Natural killer cell (primary cell): ENCODE measurements at regions of chr19 and their contacts with region 1.

Region 1: DNA sequence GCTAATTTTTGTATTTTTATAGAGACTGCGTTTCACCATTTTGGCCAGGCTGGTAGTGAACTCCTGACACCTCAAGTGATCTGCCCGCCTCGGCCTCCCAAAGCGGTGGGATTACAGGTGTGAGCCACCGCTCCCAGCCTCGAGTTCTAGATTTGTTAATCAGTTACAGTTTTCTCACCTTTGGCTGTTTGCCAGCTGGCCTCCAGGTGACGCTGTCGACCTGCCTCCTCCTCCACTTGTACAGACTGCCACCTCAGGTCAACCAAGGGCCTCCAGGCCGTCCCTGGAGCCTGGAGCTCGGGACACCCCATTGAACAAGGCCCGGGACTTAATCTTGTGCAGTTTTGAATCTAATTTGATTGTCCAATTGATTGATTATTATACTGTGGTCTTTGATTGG is 45.5 kb downstream of the IER2 start:
- DNase-seq: peak in 1 of 2 donors; percentile 80
- ATAC-seq: peak in 2 of 3 donors; percentile 49 to 52
- H3K4me3 ChIP-seq: no peak overlapping the region
- H3K4me3 Mint-ChIP-seq: no peak overlapping the region
- H3K27ac ChIP-seq: no peak overlapping the region
- H3K27ac Mint-ChIP-seq: no peak overlapping the region
- H3K4me1 ChIP-seq: peaks cover 35% of the 10 kb centered on the region
- H3K4me1 Mint-ChIP-seq: peaks cover 5 to 10% of the 10 kb centered on the region in 2 donors
- H3K27me3 ChIP-seq: no peaks in the 10 kb centered on the region
- H3K27me3 Mint-ChIP-seq: no peaks in the 10 kb centered on the region
- CTCF ChIP-seq: peak; percentile 29

Region 2: GRCh38 chr19:13262450-13262849 is 66.8 kb after region 1 on chr19:
- intact Hi-C with region 1: loop called (anchors 1 kb)
- DNase-seq: peak in 1 of 2 donors; percentile 77
- ATAC-seq: peak; percentile 50 to 72 (median 68)
- H3K4me3 ChIP-seq: no peak overlapping the region
- H3K4me3 Mint-ChIP-seq: no peak overlapping the region
- H3K27ac ChIP-seq: no peak overlapping the region
- H3K27ac Mint-ChIP-seq: no peak overlapping the region
- H3K4me1 ChIP-seq: peaks cover 3% of the 10 kb centered on the region
- H3K4me1 Mint-ChIP-seq: no peaks in the 10 kb centered on the region
- H3K27me3 ChIP-seq: peaks cover 2% of the 10 kb centered on the region
- H3K27me3 Mint-ChIP-seq: peaks cover 8 to 20% of the 10 kb centered on the region in 2 donors
- CTCF ChIP-seq: peak; percentile 73

Region 3: GRCh38 chr19:13920940-13921761 is 725.5 kb after region 1 on chr19:
- intact Hi-C with region 1: no loop called
- DNase-seq: peak; percentile 25 to 53
- ATAC-seq: peak; percentile 74 to 88 (median 85)
- H3K4me3 ChIP-seq: no peak overlapping the region
- H3K4me3 Mint-ChIP-seq: no peak overlapping the region
- H3K27ac ChIP-seq: no peak overlapping the region
- H3K27ac Mint-ChIP-seq: peak overlapping the region in 1 of 2 donors; percentile 63
- H3K4me1 ChIP-seq: no peaks in the 10 kb centered on the region
- H3K4me1 Mint-ChIP-seq: no peaks in the 10 kb centered on the region
- H3K27me3 ChIP-seq: no peaks in the 10 kb centered on the region
- H3K27me3 Mint-ChIP-seq: no peaks in the 10 kb centered on the region
- CTCF ChIP-seq: no peak